ENCODE measurements at regions of chr1 and their contacts with region 1.

Region 1: DNA sequence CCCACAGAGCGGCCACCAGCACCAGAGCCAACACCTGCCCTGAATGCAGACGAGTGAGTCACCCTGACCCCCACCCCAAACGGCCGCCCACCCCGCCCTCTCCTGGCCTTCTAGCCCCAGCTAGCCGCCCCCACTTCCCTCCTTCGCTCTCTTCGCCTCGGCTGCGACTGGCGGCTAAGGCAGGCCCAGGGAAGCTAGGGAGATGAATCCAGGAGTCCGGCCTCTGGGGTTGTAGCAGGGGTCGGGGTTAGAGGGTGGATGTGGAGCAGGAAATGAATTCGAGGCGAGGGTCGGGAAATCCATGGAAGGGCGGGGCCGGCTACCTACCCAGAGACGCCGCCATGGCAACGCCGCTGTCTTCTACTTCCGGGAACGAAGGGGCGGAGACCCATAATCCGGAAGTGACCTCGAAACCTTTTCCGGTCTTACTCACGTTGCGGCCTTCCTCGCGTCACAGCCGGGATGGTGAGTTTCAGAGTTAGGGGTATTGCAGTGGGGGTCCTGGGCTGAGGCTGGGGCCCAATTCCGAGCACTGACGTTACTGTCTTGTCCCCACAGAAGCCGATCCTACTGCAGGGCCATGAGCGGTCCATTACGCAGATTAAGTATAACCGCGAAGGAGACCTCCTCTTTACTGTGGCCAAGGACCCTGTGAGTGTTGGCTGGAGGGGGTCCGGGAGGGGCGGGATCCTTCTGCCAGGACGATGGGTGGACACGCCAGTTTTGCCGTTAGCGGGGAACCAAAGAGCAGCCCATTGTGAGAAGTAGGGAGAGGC is at the starts of genes EIF3I and TMEM234:
- DNase-seq: peak; percentile 87 to 99 (median 94)

Region 2: DNA sequence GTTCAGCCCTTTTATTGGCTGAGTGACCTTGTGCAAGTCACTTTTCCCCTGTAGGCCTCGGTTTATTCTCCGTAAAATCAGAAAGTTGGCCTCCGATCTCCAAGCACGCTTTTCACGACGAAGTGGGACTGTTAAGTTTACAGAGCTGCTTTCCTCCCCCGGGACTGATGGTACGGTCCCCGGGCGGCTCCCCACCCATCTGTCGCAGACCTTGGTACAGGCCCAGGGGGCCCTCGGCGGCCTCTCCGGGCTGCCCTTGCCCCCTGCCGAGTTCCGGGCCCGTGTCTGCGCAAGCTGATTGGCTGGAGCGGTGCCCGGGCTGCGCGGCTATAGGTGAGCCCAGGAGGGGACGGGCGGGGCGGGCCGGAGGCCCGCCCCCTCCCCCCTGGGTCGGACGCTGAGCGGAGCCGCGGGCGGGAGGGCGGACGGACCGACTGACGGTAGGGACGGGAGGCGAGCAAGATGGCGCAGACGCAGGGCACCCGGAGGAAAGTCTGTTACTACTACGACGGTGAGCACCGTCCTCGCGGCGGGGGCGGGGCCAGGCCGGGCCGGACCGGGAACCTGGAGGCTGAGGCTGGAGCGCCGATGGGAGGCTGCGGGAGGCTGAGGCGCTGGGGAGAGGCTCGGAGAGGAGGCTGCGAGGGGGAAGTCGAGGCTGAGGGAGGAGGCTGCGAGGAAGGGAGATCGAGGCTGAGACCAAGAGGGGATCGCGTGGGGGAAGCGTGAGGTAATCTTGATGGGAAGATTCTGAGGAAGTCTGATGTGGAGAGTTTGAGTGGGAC is 69.7 kb after region 1 on chr1 and contains the start of gene HDAC1:
- intact Hi-C with region 1: loop called (anchors 5 kb)
- DNase-seq: peak; percentile 78 to 97 (median 82)

Measured in posterior cingulate gyrus (tissue), 11 donors.